GM23248 (cell line): ENCODE measurements at regions of chr10 and their contacts with region 1.

Region 1: GRCh38 chr10:69418052-69418752 is 1.5 kb upstream of the TACR2 start:
- DNase-seq: no peak
- H3K4me3 ChIP-seq: no peak overlapping the region
- H3K27ac ChIP-seq: no peak overlapping the region
- H3K4me1 ChIP-seq: no peaks in the 10 kb centered on the region
- H3K27me3 ChIP-seq: peaks cover 8% of the 10 kb centered on the region; the same call in 1 of the 2 replicates

Region 2: DNA sequence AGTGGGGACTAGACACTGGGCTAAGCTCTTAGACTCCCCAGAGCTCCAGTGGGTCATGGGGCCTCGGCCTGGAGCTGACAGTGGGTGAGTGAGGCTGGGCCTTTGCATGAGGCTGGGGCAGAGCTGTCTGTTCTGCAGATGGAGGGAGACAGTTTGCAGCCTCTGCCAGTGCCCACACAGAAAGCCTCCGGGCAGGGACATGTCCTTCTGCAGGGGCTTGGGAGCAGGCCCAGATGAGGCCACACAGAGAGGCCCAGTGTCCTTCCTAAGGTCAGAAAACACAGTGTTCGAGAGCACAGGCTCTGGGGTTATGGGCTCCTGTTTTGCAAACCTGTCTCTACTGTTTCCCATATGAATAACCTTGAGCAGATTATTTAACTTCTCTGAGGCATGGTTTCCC is 165.0 kb before region 1 on chr10:
- in situ Hi-C with region 1: no loop called
- DNase-seq: no peak
- H3K4me3 ChIP-seq: no peak overlapping the region
- H3K27ac ChIP-seq: no peak overlapping the region
- H3K4me1 ChIP-seq: no peaks in the 10 kb centered on the region
- H3K27me3 ChIP-seq: no peaks in the 10 kb centered on the region

Region 3: GRCh38 chr10:69504576-69505250 is 86.5 kb after region 1 on chr10:
- in situ Hi-C with region 1: loop called (anchors 5 kb)
- DNase-seq: no peak
- H3K4me3 ChIP-seq: no peak overlapping the region
- H3K27ac ChIP-seq: no peak overlapping the region
- H3K4me1 ChIP-seq: no peaks in the 10 kb centered on the region
- H3K27me3 ChIP-seq: peaks cover 15% of the 10 kb centered on the region